Posterior vena cava (tissue), 2 donors: ENCODE measurements at regions of chr6 and their contacts with region 1.

Region 1: DNA sequence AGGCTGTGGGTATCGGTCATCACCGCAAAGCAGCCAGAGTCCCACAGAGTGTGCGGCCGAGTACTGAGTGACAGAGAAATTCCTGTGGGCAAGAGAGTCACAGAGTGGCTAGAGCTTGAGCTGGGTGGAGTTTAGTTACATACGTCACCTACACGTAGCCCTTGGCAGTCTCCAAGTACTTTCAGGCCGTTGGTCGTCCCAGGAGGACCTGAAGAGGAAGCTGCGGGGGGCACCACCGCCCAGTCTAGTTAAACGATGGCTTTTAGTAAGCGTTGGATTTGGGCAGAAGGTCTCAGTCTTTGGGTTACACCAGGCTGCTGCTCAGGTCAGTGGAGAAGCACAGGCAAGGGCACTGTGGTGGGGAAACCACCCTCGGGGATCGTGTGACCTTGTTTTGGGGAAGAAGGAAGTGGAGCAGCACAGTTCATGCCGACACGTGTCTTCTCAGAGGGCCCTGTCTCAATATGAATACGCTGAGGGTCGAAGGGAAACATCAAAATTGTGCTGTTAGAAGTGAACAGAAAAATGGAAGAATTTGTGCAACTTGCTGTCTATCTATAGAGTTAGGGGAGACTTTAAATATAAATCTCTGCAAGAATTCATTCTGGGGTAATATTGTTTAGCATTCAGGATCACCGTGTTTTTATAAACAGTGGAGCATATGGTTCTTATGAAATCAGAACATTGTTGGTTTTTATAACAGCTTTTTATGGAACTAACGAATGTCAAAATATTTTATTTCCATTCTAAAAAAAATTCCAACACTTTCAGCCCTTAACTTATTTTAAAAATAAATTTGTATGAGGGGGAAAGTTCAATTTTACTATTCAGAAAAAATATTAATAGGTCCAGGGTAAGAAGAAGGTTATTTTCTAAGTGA is 28.6 kb downstream of the KIF25 start:
- DNase-seq: peak; percentile 81

Region 2: GRCh38 chr6:167963589-167964057 is 62.4 kb before region 1 on chr6:
- intact Hi-C with region 1: loop called in 1 of 2 experiments (anchors 2 kb)
- DNase-seq: no peak